ENCODE measurements at regions of chr18 and their contacts with region 1.

Region 1: DNA sequence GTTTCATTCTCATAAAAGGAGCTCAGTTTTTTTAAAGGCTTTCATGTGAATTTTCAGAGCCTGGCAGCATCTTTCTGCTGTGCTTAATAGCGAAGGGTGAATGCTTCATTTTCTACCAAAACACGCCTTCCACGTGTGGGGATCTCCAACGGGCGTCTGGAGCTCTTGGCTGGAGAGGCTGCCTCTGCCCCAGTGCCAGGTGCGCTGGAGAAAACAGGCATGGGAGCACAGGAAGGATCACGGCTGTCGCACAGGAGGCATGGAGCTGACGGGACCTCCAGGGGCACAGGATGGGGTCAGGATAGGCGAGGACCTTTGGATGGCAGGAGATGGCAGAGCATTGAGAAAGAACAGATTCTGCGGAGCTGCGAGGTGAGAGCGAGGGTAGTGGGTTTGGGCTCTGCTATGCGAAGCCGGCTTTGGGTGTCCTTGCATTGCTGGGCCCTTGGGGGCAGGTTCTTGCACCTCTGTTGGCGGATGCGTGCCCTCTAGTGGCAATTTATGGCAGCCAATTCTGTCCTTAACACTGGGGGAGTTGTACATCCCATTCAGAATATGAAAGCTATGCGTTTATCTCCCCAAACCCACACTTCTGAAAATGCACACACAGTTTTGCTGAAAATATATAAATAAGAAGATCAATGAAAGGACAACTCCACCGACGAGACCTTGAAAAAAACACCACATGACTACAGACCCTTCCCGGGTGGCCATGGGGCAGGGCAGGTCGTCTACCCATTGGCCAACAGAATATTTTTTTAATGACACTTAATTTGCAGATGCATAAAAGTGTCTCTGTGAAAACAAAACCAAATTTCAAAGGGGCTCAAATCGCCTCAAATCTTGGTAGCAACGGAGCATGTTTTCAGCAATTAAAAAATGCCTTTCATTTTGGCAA is 90.4 kb upstream of the SLC35G4 start:
- DNase-seq: peak; percentile 82
- H3K4me3 ChIP-seq: no peak overlapping the region
- H3K27ac ChIP-seq: no peak overlapping the region
- H3K4me1 ChIP-seq: no peaks in the 10 kb centered on the region
- CTCF ChIP-seq: peak; percentile 96

Region 2: DNA sequence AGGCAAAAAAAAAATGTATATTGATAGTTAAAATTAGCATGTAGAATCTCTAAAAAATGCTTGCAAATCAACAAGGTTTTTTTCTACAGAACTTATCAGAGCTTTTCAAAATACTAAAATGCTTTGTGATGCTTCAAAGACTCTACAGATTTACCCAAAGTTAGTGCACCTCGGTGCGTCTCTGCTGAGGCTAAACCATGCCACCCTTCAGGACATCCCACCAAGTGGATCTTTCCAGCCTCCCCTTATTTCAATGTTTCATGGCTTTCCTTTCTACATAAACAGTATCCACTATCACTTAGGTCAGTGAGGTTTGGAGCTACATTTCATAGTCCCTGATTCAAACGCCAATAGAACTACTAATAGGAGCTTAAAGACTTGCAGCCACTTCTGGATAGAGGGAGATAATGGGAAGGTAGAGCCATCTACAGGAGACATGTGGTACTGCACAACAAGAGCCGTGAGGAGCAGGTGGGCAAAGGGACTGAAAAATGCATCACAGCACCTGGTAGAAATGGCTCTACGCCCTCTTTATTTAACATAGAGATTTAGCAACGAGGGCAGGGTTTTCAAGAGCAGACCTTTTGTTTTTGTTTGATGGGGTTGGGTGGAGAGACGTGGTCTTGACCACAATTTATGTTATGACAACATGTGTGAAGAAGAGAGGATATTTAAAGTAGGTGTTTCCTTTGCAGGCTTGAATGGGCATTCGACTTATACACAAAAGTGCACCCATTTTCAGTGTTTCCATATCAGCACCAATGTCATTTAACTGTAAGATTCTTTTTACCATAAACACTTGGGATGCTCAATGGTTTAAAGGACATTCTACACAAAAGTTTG is 34.3 kb after region 1 on chr18:
- CTCF ChIA-PET with region 1: no interaction called
- POLR2A ChIA-PET with region 1: no interaction called
- intact Hi-C with region 1: loop called (anchors 2 kb)
- DNase-seq: peak; percentile 70
- H3K4me3 ChIP-seq: no peak overlapping the region
- H3K27ac ChIP-seq: no peak overlapping the region
- H3K4me1 ChIP-seq: peaks cover 8% of the 10 kb centered on the region
- CTCF ChIP-seq: peak; percentile 93

Measured in OCI-LY7 (cell line).